ENCODE measurements at regions of chr14 and their contacts with region 1.

Region 1: GRCh38 chr14:21476925-21477681 is at the starts of genes RAB2B and TOX4:
- DNase-seq: peak; percentile 97
- H3K4me3 Mint-ChIP-seq: peak within 1 kb of the TSS; percentile 100
- H3K27ac Mint-ChIP-seq: peak within 1 kb of the TSS; percentile 100
- H3K4me1 Mint-ChIP-seq: peaks cover 46% of the 10 kb centered on the region
- H3K27me3 Mint-ChIP-seq: no peaks in the 10 kb centered on the region
- total RNA-seq, gene RAB2B: 27.6 to 29.0 TPM
- total RNA-seq, gene TOX4: 82.1 to 85.6 TPM

Region 2: GRCh38 chr14:21248739-21249411 is 228.2 kb before region 1 on chr14:
- CTCF ChIA-PET with region 1: no interaction called
- POLR2A ChIA-PET with region 1: no interaction called
- DNase-seq: no peak
- H3K4me3 Mint-ChIP-seq: no peak overlapping the region
- H3K27ac Mint-ChIP-seq: no peak overlapping the region
- H3K4me1 Mint-ChIP-seq: peaks cover 61% of the 10 kb centered on the region
- H3K27me3 Mint-ChIP-seq: no peaks in the 10 kb centered on the region

Region 3: GRCh38 chr14:21383848-21384493 is 93.1 kb before region 1 on chr14 and contains the start of gene SUPT16H:
- CTCF ChIA-PET with region 1: no interaction called
- POLR2A ChIA-PET with region 1: interaction called, 12 read pairs
- DNase-seq: peak; percentile 97
- H3K4me3 Mint-ChIP-seq: peak within 1 kb of the TSS; percentile 95
- H3K27ac Mint-ChIP-seq: peak within 1 kb of the TSS; percentile 97
- H3K4me1 Mint-ChIP-seq: peaks cover 44% of the 10 kb centered on the region
- H3K27me3 Mint-ChIP-seq: no peaks in the 10 kb centered on the region
- total RNA-seq, gene SUPT16H: 114 TPM

Region 4: DNA sequence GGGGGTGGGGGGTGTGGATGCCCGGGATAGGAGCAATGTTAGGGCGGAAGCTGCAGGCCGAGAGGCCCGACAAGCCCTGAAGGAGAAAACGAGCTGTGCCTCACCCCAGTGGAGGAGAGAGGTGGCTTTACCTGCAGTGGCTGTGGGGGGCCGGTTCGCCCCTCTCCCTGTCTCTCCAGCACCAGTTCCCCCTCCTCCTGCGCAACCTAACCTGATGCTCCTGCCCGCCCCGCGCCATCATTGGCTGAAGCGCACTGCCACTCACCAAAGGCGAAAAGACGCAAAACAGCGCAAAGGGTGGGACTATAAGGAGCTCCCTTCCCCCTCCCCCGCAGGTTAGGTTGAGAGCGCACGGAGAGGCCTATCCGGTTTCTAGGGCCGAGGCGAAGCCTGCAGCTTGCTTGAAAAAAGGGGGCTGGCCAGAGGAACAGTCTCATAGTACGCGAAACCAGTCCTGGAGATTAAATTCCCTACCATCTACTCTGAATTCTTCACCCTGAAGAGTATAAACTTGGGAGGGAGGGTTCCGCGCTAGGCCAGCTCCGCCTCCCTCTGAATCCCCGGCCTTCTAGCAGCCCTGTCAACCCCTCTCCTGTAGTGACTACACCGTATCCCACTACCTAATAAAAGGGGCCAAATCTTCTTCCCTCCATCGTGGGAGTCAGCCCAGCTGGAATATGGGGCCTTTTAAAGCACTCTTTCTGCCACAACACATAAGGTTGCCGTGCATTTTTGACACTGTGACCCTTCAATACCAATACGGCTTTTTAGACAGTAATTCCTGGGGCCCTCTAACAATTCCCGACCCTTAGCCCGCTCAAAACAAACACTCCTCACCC is 39.8 kb before region 1 on chr14:
- CTCF ChIA-PET with region 1: interaction called, 13 read pairs
- POLR2A ChIA-PET with region 1: interaction called, 22 read pairs
- DNase-seq: peak; percentile 99
- H3K4me3 Mint-ChIP-seq: peak overlapping the region; percentile 86
- H3K27ac Mint-ChIP-seq: peak overlapping the region; percentile 76
- H3K4me1 Mint-ChIP-seq: peaks cover 50% of the 10 kb centered on the region
- H3K27me3 Mint-ChIP-seq: no peaks in the 10 kb centered on the region

Region 5: DNA sequence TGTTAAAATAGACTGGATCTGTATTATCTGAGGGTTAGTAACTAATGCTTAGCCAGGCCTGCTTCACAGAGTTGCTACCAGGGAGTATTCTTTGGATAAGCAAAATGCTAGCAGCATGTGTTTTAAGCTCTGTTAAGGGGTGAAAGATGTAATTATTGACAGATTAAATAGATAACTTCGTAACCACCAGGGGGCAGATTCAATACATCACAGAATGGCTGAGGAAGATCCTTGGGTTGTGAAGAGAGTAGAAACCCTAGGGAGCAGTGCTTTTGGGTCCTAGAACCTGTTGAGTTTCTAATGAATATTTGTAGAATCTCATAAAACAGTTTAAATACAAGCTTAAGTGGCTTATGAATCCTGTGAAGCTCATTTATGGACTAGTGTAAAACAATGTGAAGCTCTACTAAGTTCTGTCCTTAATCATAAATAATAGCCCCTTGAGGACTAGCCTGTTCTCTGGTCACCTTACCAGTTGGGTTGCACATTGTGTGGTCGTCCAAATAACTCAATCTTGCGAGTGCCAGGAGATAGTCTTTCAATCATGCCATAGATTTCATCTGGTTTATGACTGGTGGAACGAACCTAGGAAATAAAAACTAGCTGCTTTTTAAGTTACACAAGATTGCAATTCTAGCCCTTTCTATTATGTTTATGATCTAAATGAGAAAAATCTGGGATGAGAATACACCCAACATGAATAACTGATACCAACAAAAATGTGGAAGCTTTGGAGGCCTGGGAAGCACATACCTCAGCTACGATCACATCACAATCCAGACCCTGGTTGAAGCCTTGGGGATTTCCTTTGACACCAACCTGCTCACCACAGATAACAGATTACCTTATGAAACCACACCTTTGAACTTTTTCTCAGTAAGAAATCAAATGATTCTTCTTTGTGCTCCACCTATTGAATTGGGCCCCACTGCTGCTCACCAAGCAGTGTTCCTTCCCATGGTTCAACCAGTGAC is 21.7 kb after region 1 on chr14:
- CTCF ChIA-PET with region 1: interaction called, 29 read pairs
- POLR2A ChIA-PET with region 1: interaction called, 16 read pairs
- DNase-seq: no peak
- H3K4me3 Mint-ChIP-seq: no peak overlapping the region
- H3K27ac Mint-ChIP-seq: peak overlapping the region; percentile 27
- H3K4me1 Mint-ChIP-seq: peaks cover 24% of the 10 kb centered on the region
- H3K27me3 Mint-ChIP-seq: no peaks in the 10 kb centered on the region

Region 6: DNA sequence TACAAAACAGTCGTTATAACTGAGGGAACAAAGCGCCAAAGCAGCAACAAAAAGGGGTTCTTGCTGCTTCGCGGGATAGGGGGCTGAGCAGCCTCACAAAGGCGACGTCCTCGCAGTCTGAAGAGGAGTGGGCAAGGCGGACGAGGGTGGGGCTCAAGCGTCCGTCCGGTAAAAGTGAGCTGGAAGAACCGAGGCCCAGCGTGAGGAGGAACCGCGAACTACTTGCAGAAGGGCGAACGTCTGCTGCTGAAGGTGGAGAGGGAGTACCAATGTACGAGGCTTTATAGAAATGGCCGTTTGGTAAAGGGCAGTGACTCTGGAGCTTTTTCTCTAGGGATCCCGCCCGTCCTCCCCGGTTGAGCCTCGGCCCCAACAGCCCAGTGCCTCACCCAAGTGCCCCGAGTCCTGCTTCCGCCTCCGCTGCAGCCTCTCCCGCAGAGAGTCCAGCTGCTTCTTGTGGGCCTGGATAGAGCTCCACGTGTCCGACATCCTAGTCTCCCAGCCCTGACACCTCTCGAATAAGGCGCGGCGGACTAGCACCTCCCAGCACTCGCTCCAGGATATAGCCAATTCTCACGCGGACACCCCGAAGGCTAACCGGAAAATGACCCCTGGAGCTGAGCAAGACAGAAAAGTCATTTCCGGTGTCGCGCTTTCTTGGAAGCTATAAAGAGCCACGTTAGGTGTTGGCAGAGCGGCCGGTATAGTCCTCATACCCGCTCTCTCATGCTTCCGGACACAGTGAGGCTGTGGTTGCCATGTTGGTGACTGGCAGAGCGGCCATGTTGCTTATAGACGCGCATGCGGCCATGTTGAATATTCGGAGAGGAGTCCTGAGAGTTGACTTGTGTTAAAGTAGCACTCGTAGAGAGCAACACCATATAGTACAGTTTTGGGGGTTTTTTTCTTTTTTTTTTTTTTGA is 33.9 kb after region 1 on chr14 and contains the start of gene METTL3:
- CTCF ChIA-PET with region 1: interaction called, 20 read pairs
- POLR2A ChIA-PET with region 1: interaction called, 42 read pairs
- DNase-seq: peak; percentile 95
- H3K4me3 Mint-ChIP-seq: peak within 1 kb of the TSS; percentile 96
- H3K27ac Mint-ChIP-seq: peak within 1 kb of the TSS; percentile 96
- H3K4me1 Mint-ChIP-seq: peaks cover 43% of the 10 kb centered on the region
- H3K27me3 Mint-ChIP-seq: no peaks in the 10 kb centered on the region
- total RNA-seq, gene METTL3: 75.6 to 77.6 TPM